ENCODE measurements at regions of chr22 and their contacts with region 1.

Region 1: DNA sequence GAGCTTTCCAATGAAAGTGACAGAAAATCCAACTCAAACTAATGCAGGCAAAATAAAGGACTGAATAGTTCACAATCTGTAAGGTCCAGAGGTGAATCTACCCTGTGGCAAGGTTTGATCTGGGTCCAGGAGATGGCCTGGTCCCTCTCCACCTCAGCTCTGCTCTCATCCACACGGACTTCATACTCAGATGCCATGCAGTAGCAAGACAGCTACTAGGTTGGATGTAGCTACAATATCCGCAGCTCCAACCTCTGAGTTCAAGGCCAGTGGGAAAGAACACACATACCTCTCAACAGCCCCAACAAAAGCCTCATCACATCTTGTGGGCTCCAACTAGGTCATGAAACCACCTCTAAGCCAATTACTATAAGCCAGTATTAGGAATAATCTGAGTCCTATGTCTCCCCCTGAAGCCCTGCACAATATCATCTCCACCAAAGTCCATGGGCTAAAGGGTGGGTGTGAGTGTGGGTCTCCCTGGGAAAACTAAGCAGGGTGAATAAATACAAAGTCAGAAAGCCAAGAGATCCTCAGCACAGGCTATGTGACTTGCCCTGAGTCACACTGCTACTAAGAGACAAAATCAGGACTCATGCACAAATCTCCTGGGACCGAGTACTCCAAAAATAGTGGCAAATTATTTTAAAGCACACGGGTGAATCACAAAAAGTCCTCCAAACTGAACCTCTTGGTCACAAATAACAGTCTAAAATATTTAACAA is 78.8 kb downstream of the LARGE1 start:
- DNase-seq: no peak
- H3K4me3 ChIP-seq: no peak overlapping the region
- H3K27ac ChIP-seq: peak overlapping the region; percentile 6
- H3K4me1 ChIP-seq: peaks cover 34% of the 10 kb centered on the region
- H3K27me3 ChIP-seq: no peaks in the 10 kb centered on the region
- CTCF ChIP-seq: no peak
- POLR2A ChIP-seq: no peak

Region 2: GRCh38 chr22:33796494-33796893 is 44.9 kb before region 1 on chr22:
- intact Hi-C with region 1: loop called (anchors 10 kb)
- DNase-seq: no peak
- H3K4me3 ChIP-seq: no peak overlapping the region
- H3K27ac ChIP-seq: no peak overlapping the region
- H3K4me1 ChIP-seq: peaks cover 7% of the 10 kb centered on the region
- H3K27me3 ChIP-seq: no peaks in the 10 kb centered on the region
- CTCF ChIP-seq: no peak
- POLR2A ChIP-seq: no peak

Region 3: GRCh38 chr22:34036931-34037330 is 195.5 kb after region 1 on chr22:
- intact Hi-C with region 1: no loop called
- DNase-seq: no peak
- H3K4me3 ChIP-seq: no peak overlapping the region
- H3K27ac ChIP-seq: no peak overlapping the region
- H3K4me1 ChIP-seq: no peaks in the 10 kb centered on the region
- H3K27me3 ChIP-seq: no peaks in the 10 kb centered on the region
- CTCF ChIP-seq: no peak
- POLR2A ChIP-seq: no peak